IMR-90 (cell line): ENCODE measurements at regions of chr10 and their contacts with region 1.

Region 1: DNA sequence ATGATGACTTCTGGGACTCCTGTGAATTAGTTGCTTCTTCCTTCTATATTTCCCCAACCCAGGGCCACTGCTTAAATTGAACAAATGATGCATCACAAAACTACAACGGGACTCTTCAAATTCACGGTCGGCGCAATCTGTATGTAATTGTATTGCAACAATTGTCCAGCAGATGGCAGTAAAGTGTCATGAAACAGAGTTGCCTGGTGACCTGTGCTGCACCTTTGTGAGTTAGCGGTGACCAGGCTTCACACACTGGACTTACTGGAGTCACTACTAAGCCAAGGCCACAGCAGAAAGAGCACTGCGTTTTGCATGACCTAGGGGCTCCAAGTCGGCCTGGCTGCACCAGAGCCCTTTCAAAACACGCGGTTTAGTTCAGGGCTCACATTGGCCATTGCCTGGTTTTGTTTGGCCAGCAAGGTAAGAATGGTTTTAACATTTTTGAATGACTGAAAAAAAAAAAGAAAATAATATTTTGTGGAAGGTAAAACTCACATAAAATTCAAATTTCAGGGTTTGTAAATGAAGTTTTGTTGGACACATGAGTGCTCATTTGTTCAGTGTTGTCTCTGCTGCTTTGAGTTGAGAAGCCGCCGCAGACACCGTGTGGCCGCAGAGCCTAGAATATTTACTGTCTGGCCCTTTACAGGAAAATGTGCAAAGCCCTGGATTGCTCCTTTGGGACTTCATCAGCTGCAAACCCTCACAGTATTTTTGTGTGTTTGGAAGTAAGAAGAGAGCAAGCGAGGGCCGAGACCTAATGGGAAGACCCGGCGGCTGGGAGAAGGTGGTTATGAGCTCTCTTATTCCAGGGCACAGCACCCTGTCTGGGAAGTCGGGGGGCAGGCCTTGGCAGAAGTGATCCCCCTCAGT is 23.2 kb upstream of the ZNF32 start:
- DNase-seq: peak; percentile 75
- ATAC-seq: peak; percentile 76
- H3K4me3 ChIP-seq: no peak overlapping the region
- H3K27ac ChIP-seq: no peak overlapping the region
- H3K4me1 ChIP-seq: peaks cover 2% of the 10 kb centered on the region; the same call in 1 of the 2 replicates
- H3K27me3 ChIP-seq: no peaks in the 10 kb centered on the region; the same call in 1 of the 2 replicates
- CTCF ChIP-seq: peak; percentile 84
- POLR2A ChIP-seq: no peak
- RAD21 ChIP-seq: peak; percentile 96

Region 2: GRCh38 chr10:44008270-44008916 is 336.5 kb after region 1 on chr10:
- CTCF ChIA-PET with region 1: no interaction called
- POLR2A ChIA-PET with region 1: no interaction called
- dilution Hi-C with region 1: no loop called
- in situ Hi-C with region 1: no loop called
- intact Hi-C with region 1: no loop called
- DNase-seq: peak; percentile 59
- ATAC-seq: no peak
- H3K4me3 ChIP-seq: no peak overlapping the region
- H3K27ac ChIP-seq: no peak overlapping the region
- H3K4me1 ChIP-seq: no peaks in the 10 kb centered on the region
- H3K27me3 ChIP-seq: peaks cover 8% of the 10 kb centered on the region
- CTCF ChIP-seq: no peak
- POLR2A ChIP-seq: no peak
- RAD21 ChIP-seq: no peak

Region 3: DNA sequence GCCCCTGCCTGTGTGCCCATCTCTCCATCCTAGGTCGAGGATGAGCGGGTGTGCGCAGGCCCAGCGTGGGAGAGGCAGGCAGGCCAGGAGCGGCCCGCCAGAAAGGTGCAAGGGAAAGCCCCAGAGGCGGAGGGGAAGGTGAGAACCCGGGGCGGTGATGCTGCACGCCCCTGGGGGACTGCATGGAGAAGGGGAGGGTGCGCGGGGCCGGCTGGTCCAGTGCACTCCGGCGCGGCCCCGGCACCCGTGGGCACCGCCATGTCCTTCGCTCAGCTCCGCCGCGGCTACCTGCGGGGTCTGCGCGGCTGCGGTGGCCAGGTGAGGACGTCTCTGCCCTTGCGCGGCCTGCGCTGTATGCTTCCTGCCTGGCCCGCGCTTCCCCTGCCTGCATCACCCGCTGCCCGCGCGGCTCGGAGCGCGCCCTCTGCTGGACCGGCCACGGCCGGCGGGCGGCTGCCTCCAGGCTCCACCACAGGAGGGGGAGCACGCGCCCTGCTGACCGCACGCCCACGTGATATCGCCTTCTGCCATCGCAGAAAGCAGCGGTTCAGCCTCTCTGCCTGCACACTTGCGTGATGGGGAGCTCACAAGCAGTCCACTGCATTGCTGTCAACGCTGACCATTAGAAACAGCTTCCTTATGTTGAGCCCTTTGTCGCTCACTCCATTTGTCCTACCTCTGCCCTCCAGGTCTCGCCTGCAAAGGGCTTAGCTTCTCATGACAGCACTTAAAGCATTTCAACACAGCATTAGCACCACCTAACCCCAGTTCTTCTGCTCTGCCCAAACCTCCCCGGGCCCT is 639.1 kb after region 1 on chr10:
- CTCF ChIA-PET with region 1: no interaction called
- POLR2A ChIA-PET with region 1: no interaction called
- dilution Hi-C with region 1: no loop called
- in situ Hi-C with region 1: no loop called
- intact Hi-C with region 1: loop called (anchors 1 kb)
- DNase-seq: peak; percentile 79
- ATAC-seq: peak; percentile 100
- H3K4me3 ChIP-seq: no peak overlapping the region
- H3K27ac ChIP-seq: no peak overlapping the region
- H3K4me1 ChIP-seq: peaks cover 6% of the 10 kb centered on the region
- H3K27me3 ChIP-seq: peaks cover 1% of the 10 kb centered on the region
- CTCF ChIP-seq: peak; percentile 98
- POLR2A ChIP-seq: no peak
- RAD21 ChIP-seq: peak; percentile 88

Region 4: GRCh38 chr10:44725404-44725803 is 1053.5 kb after region 1 on chr10:
- CTCF ChIA-PET with region 1: no interaction called
- POLR2A ChIA-PET with region 1: no interaction called
- dilution Hi-C with region 1: no loop called
- in situ Hi-C with region 1: no loop called
- intact Hi-C with region 1: loop called (anchors 10 kb)
- DNase-seq: peak; percentile 40
- ATAC-seq: peak; percentile 64
- H3K4me3 ChIP-seq: no peak overlapping the region
- H3K27ac ChIP-seq: no peak overlapping the region
- H3K4me1 ChIP-seq: peaks cover 6% of the 10 kb centered on the region; the same call in 1 of the 2 replicates
- H3K27me3 ChIP-seq: no peaks in the 10 kb centered on the region
- CTCF ChIP-seq: no peak
- POLR2A ChIP-seq: no peak
- RAD21 ChIP-seq: no peak

Region 5: GRCh38 chr10:44857363-44858016 is 1185.6 kb after region 1 on chr10:
- CTCF ChIA-PET with region 1: interaction called, 5 read pairs
- POLR2A ChIA-PET with region 1: no interaction called
- dilution Hi-C with region 1: no loop called
- in situ Hi-C with region 1: loop called (anchors 5 kb)
- intact Hi-C with region 1: loop called (anchors 2 kb)
- DNase-seq: peak; percentile 84
- ATAC-seq: peak; percentile 91
- H3K4me3 ChIP-seq: no peak overlapping the region
- H3K27ac ChIP-seq: no peak overlapping the region
- H3K4me1 ChIP-seq: peaks cover 4% of the 10 kb centered on the region; the same call in 1 of the 2 replicates
- H3K27me3 ChIP-seq: no peaks in the 10 kb centered on the region
- CTCF ChIP-seq: peak; percentile 94
- POLR2A ChIP-seq: no peak
- RAD21 ChIP-seq: peak; percentile 97

Region 6: DNA sequence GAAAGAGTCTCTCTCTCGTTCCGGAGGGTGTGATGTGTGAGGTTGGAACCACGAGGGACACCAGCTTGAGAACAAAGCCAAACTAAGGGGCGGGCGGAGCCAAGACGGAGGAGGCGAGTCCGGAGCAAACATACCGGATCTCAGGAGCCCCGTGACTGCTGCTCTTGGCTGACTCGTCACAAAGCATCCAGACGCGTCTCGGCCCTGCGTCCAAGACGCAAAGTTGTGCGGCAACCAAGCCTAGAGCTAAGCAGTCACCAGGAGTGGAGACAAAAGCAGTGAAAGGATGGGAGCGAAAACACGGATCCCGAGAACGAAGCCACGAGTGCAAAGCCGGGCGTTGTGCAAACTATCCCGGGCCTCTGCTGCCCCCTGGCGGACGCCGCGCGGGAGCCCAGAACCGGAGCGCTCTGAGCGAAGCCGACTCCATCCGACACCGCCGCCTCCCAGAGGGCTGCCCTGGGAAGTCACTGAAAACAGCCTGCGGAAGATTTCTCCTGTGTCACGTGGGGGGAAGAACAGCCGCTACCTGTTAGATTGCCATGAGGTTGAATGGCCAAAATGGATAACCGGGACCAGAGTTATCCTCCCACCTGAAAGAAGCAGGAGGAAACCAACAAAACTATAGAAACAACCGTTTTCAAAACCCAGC is 1192.9 kb after region 1 on chr10:
- CTCF ChIA-PET with region 1: interaction called, 3 read pairs
- POLR2A ChIA-PET with region 1: no interaction called
- dilution Hi-C with region 1: no loop called
- in situ Hi-C with region 1: loop called (anchors 5 kb)
- intact Hi-C with region 1: loop called (anchors 1 kb)
- DNase-seq: peak; percentile 75
- ATAC-seq: peak; percentile 94
- H3K4me3 ChIP-seq: peak overlapping the region; percentile 68
- H3K27ac ChIP-seq: peak overlapping the region; percentile 65
- H3K4me1 ChIP-seq: peaks cover 4% of the 10 kb centered on the region; the same call in 1 of the 2 replicates
- H3K27me3 ChIP-seq: peaks cover 3% of the 10 kb centered on the region; the same call in 1 of the 2 replicates
- CTCF ChIP-seq: peak; percentile 98
- POLR2A ChIP-seq: no peak
- RAD21 ChIP-seq: peak; percentile 94